Activated CD8-positive, alpha-beta memory T cell treated with anti-CD3 and anti-CD28 coated beads, Interleukin-2, amount 10 ng/mL, durations not matched to agents 7 days and 5 days (primary cell): ENCODE measurements at regions of chr9 and their contacts with region 1.

Region 1: DNA sequence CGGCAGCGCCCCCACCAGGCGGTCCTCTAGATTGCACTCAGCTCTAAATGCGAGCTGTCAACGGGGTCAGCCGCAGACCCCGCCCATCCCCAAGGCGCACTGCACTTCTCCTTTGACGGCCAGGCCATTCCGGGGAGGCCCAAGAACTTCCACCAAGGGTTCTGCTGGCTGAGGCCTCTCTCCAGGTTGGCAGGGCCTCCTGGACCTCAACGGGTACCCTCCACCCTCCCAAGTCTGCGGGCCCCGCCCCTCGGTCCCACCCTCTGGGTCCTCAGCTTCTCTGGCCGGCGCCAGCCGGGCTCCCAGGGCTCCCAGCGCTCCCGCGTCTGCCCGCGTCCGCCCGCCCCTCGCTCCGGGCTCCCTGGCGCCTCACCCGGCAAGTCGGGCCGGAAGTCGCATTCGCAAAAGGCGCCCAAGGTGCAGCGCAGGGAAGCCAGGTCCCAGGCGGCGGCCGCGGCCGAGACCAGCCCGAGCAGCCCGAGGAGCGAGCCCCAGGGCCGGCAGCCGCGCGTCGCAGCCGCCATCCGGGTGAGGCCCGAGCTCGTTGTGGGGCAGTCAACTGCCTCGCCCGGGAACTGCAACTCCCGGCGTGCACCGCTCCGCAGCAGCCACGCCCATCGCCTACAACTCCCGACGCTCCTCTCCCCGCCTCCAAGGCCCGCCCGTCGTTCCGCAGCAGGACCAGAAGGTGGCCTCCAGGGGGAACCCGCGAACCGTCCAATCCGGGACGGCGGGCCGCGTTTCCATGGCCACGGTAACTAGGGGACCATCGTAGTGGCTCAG is at the start of gene TOR2A:
- DNase-seq: peak; percentile 98
- ATAC-seq: peak; percentile 93
- H3K4me3 Mint-ChIP-seq: peak within 1 kb of the TSS; percentile 76
- H3K27ac Mint-ChIP-seq: peak within 1 kb of the TSS; percentile 83
- H3K4me1 Mint-ChIP-seq: peaks cover 20% of the 10 kb centered on the region
- H3K27me3 Mint-ChIP-seq: no peaks in the 10 kb centered on the region
- total RNA-seq, gene TOR2A: 24.1 to 26.8 TPM

Region 2: GRCh38 chr9:127568971-127569885 is 165.7 kb before region 1 on chr9:
- CTCF ChIA-PET with region 1: interaction called, 12 read pairs
- DNase-seq: peak; percentile 88
- ATAC-seq: peak; percentile 85
- H3K4me3 Mint-ChIP-seq: peak overlapping the region; percentile 75
- H3K27ac Mint-ChIP-seq: peak overlapping the region; percentile 95
- H3K4me1 Mint-ChIP-seq: peaks cover 58% of the 10 kb centered on the region
- H3K27me3 Mint-ChIP-seq: no peaks in the 10 kb centered on the region

Region 3: DNA sequence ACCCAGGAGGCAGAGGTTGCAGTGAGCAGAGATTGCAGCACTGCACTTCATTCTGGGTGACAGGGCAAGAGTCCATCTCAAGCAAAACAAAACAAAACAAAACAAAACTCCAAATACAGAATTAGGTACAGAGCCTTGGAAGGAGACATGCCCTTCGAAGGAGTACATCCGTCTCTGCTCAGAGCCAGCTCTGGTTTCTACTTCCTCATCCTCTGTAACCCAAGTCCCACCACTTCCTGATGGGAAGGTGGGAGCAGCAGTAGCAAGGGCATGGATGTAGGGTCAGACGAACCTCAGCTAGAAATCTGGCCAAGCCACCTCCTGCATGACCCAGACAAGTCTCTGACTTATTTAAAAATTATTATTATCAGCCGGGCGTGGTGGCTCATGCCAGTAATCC is 139.3 kb before region 1 on chr9:
- CTCF ChIA-PET with region 1: interaction called, 45 read pairs
- DNase-seq: no peak
- ATAC-seq: no peak
- H3K4me3 Mint-ChIP-seq: no peak overlapping the region
- H3K27ac Mint-ChIP-seq: no peak overlapping the region
- H3K4me1 Mint-ChIP-seq: no peaks in the 10 kb centered on the region
- H3K27me3 Mint-ChIP-seq: no peaks in the 10 kb centered on the region

Region 4: GRCh38 chr9:127715394-127716337 is 19.3 kb before region 1 on chr9 and contains the starts of genes PTRH1 and TTC16:
- CTCF ChIA-PET with region 1: interaction called, 30 read pairs
- DNase-seq: peak; percentile 98
- ATAC-seq: peak; percentile 95
- H3K4me3 Mint-ChIP-seq: peak within 1 kb of the TSS; percentile 93
- H3K27ac Mint-ChIP-seq: peak within 1 kb of the TSS; percentile 90
- H3K4me1 Mint-ChIP-seq: peaks cover 36% of the 10 kb centered on the region
- H3K27me3 Mint-ChIP-seq: no peaks in the 10 kb centered on the region
- total RNA-seq, gene PTRH1: 12.5 to 14.4 TPM
- total RNA-seq, gene TTC16: 1.2 to 5.2 TPM

Region 5: GRCh38 chr9:127770905-127771569 is 36.1 kb after region 1 on chr9:
- CTCF ChIA-PET with region 1: interaction called, 40 read pairs
- DNase-seq: peak; percentile 98
- ATAC-seq: peak; percentile 91
- H3K4me3 Mint-ChIP-seq: peak overlapping the region; percentile 85
- H3K27ac Mint-ChIP-seq: peak overlapping the region; percentile 88
- H3K4me1 Mint-ChIP-seq: peaks cover 79% of the 10 kb centered on the region
- H3K27me3 Mint-ChIP-seq: no peaks in the 10 kb centered on the region

Region 6: DNA sequence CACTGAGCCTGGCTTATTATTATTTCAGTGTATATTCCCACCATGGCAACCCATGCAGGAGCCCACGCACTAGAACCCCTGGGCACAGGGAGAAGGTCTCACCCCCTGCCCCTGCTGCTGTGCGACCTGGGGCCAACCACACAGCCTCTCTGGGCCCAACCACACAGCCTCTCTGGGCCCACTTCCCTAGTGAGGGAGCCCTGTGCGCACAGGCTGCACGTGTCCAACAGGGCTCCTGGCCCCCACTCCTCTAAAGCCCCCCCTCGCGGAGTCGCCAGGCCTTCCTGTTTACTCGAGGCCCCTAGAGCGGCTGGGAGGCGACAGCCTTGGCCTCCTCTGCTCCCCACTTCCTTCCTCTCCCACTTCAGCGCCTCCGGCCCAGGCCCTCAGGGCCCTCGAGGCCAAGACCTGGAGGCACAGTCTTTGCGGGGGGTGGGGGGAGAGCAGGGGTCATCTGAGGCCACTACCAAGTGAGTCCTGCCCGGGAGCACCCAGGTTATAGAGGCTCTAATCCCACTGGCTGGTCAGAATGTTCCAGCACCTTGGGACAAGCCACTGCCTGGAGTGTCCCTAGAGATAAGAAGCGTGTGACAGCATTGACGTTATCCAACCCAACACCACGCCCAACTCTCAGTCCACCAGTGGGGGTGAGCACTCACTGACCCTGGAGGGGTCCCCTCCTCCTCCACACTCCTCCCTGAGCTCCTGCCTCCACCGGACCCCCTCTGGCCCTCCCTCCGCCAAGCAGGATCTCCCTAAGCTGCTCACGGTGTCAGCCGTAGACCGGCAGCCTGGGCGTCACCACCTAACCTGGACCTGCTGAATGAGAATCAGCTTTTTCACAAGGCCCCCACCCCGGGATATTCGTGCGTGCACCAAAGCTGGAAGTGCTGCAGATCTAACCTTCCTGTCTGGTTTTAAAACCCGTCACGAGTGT is 127.4 kb after region 1 on chr9:
- CTCF ChIA-PET with region 1: interaction called, 25 read pairs
- DNase-seq: peak; percentile 86
- ATAC-seq: peak; percentile 82
- H3K4me3 Mint-ChIP-seq: no peak overlapping the region
- H3K27ac Mint-ChIP-seq: peak overlapping the region; percentile 89
- H3K4me1 Mint-ChIP-seq: peaks cover 43% of the 10 kb centered on the region
- H3K27me3 Mint-ChIP-seq: no peaks in the 10 kb centered on the region

Region 7: GRCh38 chr9:127916665-127917613 is 182.0 kb after region 1 on chr9 and contains the start of gene ST6GALNAC4:
- CTCF ChIA-PET with region 1: interaction called, 35 read pairs
- DNase-seq: peak; percentile 96
- ATAC-seq: peak; percentile 94
- H3K4me3 Mint-ChIP-seq: peak within 1 kb of the TSS; percentile 81
- H3K27ac Mint-ChIP-seq: peak within 1 kb of the TSS; percentile 91
- H3K4me1 Mint-ChIP-seq: peaks cover 75% of the 10 kb centered on the region
- H3K27me3 Mint-ChIP-seq: peaks cover under 1% of the 10 kb centered on the region
- total RNA-seq, gene ST6GALNAC4: 64.7 to 71.4 TPM